Naive thymus-derived CD4-positive, alpha-beta T cell (primary cell): ENCODE measurements at regions of chr5 and their contacts with region 1.

Region 1: DNA sequence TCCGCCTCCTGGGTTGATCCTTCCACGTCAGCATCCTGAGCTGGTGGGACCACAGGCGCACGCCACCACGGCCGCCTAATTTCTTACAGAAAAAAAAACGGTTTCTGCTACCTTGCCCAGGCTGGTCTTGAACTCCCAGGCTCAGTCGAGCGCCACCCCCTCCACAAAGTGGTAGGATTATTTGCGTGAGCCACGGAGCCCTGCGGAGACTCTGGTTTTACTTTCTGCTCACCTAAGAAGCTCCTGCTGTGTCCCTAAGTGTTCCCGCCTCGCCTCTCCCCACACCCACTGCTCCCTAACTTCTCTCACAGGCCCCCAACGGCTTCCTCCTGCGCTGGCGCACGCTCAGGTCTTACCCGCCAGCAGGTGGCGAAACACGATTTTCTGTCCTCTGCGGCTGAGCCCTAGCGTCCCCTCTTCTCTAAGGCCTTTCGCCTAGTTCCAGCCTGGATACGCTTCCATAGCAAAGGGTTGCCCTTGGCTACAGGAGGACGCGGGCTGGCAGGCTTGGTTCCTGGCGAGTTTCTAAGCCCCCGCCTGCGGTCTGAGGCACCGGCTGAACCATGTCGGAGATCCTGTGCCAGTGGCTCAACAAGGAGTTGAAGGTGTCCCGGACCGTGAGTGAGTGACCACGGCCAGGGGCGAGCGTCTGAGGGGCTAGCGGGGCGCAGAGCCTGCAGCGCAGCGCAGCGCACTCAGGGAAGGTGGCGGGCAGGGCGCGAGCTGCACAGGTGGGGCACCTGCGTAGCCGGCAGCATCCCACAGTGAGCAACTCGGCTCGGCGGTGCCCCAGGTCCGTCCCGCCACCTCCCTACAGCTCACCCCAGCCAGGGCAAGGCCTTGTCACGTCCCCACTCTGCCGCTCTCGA is at the start of gene SPEF2:
- DNase-seq: peak; percentile 57 to 76 (median 71)
- ATAC-seq: peak; percentile 95
- H3K4me3 ChIP-seq: peak within 1 kb of the TSS; percentile 95
- H3K4me3 Mint-ChIP-seq: peak within 1 kb of the TSS; percentile 91 to 96 (median 94)
- H3K27ac ChIP-seq: peak within 1 kb of the TSS; percentile 27
- H3K27ac Mint-ChIP-seq: peak within 1 kb of the TSS; percentile 79 to 96 (median 89)
- H3K4me1 ChIP-seq: peaks cover 4 to 12% of the 10 kb centered on the region in 2 donors
- H3K4me1 Mint-ChIP-seq: peaks cover 14 to 34% (median 26%) of the 10 kb centered on the region in 7 donors
- H3K27me3 ChIP-seq: no peaks in the 10 kb centered on the region
- H3K27me3 Mint-ChIP-seq: no peaks in the 10 kb centered on the region
- total RNA-seq, gene SPEF2: 7.1 to 13.5 (median 9.9) TPM

Region 2: GRCh38 chr5:35089334-35090314 is 528.0 kb before region 1 on chr5:
- CTCF ChIA-PET with region 1: no interaction called
- POLR2A ChIA-PET with region 1: no interaction called
- intact Hi-C with region 1: loop called in 1 of 2 experiments (anchors 1 kb)
- DNase-seq: peak; percentile 15 to 55 (median 37)
- ATAC-seq: peak; percentile 56
- H3K4me3 ChIP-seq: no peak overlapping the region
- H3K4me3 Mint-ChIP-seq: no peak overlapping the region
- H3K27ac ChIP-seq: no peak overlapping the region
- H3K27ac Mint-ChIP-seq: no peak overlapping the region
- H3K4me1 ChIP-seq: no peaks in the 10 kb centered on the region
- H3K4me1 Mint-ChIP-seq: peaks cover 0 to 3% (median 0%) of the 10 kb centered on the region in 7 donors
- H3K27me3 ChIP-seq: no peaks in the 10 kb centered on the region
- H3K27me3 Mint-ChIP-seq: peaks cover 0 to 7% (median 6%) of the 10 kb centered on the region in 5 donors

Region 3: GRCh38 chr5:35478856-35479682 is 138.6 kb before region 1 on chr5:
- CTCF ChIA-PET with region 1: interaction called, 5 read pairs
- POLR2A ChIA-PET with region 1: no interaction called
- intact Hi-C with region 1: loop called in 1 of 2 experiments (anchors 5 kb)
- DNase-seq: peak in 6 of 9 donors; percentile 20 to 45 (median 32)
- ATAC-seq: peak; percentile 63
- H3K4me3 ChIP-seq: peak overlapping the region; percentile 23
- H3K4me3 Mint-ChIP-seq: peak overlapping the region; percentile 67 to 92 (median 78)
- H3K27ac ChIP-seq: peak overlapping the region; percentile 43
- H3K27ac Mint-ChIP-seq: peak overlapping the region; percentile 75 to 98 (median 89)
- H3K4me1 ChIP-seq: no peaks in the 10 kb centered on the region
- H3K4me1 Mint-ChIP-seq: peaks cover 8 to 23% (median 15%) of the 10 kb centered on the region in 7 donors
- H3K27me3 ChIP-seq: no peaks in the 10 kb centered on the region
- H3K27me3 Mint-ChIP-seq: peaks cover 0 to 9% (median 0%) of the 10 kb centered on the region in 5 donors